Activated B cell treated with CpG ODN at 0.5 μM for 24 hours (primary cell): ENCODE measurements at regions of chr2 and their contacts with region 1.

Region 1: DNA sequence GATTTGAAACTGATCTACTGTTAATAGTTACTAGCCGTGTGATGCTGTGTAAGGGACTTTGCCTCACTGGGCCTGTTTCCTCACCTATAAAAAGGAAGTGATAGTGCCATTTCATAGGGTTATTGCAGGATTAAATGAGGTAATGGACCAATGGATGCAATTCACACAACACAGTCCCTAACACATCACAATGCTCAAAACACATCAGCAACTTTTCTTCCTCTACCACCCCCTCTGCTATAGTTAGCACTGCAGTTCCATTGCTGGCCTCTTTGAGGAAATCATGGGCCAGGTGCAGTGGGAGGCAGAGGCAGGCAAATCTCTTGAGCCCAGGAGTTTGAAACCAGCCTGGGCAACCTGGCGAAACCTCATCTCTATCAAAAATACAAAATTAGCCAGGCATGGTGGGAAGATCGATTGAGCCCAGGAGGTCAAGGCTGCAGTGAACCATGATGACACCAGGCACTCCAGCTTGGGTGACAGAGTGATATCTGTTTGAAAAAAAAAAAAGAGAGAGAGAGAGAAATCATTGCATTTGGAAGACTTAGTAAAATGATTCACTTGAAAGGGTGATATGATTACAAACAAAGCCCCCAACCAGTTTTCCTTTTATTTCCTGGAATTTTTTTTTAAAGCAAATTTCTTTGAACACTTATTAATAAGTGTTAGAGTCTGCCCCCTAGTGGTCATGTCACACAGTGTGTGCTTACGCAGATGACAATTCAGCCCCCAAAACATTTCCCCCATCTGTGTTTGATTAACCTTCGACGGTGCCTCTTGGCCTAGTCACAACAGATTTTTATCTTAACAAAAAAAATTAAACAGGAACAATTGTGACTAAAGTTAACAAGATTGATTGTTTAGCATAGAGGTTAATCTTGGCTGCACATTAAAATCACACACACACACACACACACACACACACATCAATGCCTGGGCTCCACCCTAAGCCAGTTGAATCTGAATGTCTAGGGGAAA is 88.6 kb upstream of the BCL11A start:
- DNase-seq: no peak
- ATAC-seq: peak; percentile 56
- H3K4me3 Mint-ChIP-seq: no peak overlapping the region
- H3K27ac Mint-ChIP-seq: no peak overlapping the region
- H3K4me1 Mint-ChIP-seq: peaks cover 23% of the 10 kb centered on the region
- H3K27me3 Mint-ChIP-seq: peaks cover 3% of the 10 kb centered on the region
- CTCF ChIP-seq: peak; percentile 34

Region 2: DNA sequence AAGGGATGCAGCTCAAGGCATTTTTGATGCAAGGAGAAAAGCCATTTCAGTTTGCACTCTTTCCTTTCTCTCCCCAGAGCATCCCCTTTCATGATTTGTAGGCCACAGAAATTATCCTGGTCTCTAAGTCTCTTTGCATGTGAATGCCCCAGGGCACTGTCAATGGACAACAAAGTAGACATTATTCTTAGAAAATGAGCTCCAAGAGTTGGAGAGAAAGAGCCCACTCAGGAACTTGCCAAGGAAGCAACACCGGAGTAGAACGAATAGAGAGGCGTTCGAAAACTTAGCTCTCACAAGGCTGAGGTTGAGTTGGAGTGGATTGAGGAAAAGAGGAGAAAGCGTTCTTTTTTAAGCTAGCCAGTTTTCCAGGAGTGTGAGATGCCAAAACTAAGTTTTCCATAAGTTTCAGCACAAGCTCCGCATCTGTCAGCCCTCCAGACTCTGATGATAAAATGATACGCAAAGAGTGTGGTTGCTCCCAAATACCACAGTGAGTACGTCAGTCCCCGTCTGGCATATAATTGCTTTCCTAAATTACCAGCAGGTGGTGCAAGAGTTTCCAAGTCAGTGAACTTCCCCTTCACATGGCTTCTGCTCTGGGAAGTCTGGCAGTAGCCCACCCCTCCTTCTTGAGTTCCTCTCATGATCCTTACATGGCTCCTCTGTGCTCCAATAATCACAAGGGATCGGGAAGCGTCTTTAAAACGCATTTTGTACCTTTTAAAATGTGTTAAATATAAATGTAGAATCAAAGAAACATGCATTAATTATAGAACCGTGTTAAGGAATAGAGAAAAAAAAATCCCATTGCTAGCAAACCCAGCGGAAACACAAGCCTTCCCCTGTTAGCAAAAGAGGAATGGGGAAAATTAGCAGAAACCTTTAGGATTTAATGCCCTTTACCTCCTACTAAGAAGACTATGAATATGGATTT is 1340.4 kb before region 1 on chr2:
- CTCF ChIA-PET with region 1: no interaction called
- POLR2A ChIA-PET with region 1: no interaction called
- intact Hi-C with region 1: loop called (anchors 5 kb)
- DNase-seq: no peak
- ATAC-seq: peak; percentile 67
- H3K4me3 Mint-ChIP-seq: no peak overlapping the region
- H3K27ac Mint-ChIP-seq: no peak overlapping the region
- H3K4me1 Mint-ChIP-seq: no peaks in the 10 kb centered on the region
- H3K27me3 Mint-ChIP-seq: peaks cover 2% of the 10 kb centered on the region
- CTCF ChIP-seq: no peak